HCT116 (cell line): ENCODE measurements at regions of chr16 and their contacts with region 1.

Region 1: DNA sequence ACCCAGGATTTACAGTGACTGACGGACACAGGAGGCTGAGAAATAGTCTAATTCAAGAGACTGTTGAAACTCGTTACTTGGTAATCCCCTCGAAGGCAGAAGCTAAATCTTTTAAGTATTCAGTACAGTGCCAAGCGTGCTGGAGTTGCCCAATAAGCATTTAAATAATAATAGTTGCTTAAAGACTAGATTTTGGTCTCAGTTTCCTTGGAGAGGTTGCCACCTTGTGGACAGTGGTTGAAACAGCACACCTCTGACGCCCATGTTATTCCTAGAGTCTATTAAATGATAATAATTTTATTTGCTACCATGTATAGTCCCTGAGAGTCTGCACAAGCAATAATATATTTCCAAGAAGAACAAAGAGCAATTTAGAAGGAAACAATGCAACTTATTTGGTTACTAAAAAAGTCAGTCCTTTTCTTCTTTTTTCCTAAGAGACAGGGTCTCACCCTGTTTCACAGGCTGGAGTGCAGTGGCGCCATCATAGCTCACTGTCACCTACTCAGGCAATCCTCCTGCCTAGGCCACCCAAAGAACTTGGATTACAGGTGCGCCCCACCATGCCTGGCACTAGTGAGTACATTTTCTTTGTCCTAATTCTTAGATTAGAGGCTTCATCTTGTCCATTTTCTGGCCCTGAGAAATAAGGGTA is 138.0 kb upstream of the NUDT7 start:
- DNase-seq: peak; percentile 46
- ATAC-seq: peak; percentile 80
- H3K4me3 ChIP-seq: no peak overlapping the region
- H3K27ac ChIP-seq: no peak overlapping the region
- H3K4me1 ChIP-seq: peaks cover 9 to 18% of the 10 kb centered on the region in 2 experiments
- H3K27me3 ChIP-seq: peaks cover 26% of the 10 kb centered on the region
- CTCF ChIP-seq: peak; percentile 66 to 96 (median 81)
- POLR2A ChIP-seq: no peak
- RAD21 ChIP-seq: peak; percentile 88

Region 2: GRCh38 chr16:77406677-77407076 is 177.7 kb before region 1 on chr16:
- CTCF ChIA-PET with region 1: no interaction called
- POLR2A ChIA-PET with region 1: no interaction called
- RAD21 ChIA-PET with region 1: no interaction called
- intact Hi-C with region 1: loop called (anchors 2 kb)
- DNase-seq: peak; percentile 4
- ATAC-seq: peak; percentile 55; the same call in 1 of the 2 replicates
- H3K4me3 ChIP-seq: no peak overlapping the region
- H3K27ac ChIP-seq: no peak overlapping the region
- H3K4me1 ChIP-seq: no peaks in the 10 kb centered on the region
- H3K27me3 ChIP-seq: peaks cover 20% of the 10 kb centered on the region; the same call in 1 of the 2 replicates
- CTCF ChIP-seq: peak; percentile 17 to 48 (median 41); a peak in 4 of 6 replicates
- POLR2A ChIP-seq: no peak
- RAD21 ChIP-seq: peak; percentile 43

Region 3: DNA sequence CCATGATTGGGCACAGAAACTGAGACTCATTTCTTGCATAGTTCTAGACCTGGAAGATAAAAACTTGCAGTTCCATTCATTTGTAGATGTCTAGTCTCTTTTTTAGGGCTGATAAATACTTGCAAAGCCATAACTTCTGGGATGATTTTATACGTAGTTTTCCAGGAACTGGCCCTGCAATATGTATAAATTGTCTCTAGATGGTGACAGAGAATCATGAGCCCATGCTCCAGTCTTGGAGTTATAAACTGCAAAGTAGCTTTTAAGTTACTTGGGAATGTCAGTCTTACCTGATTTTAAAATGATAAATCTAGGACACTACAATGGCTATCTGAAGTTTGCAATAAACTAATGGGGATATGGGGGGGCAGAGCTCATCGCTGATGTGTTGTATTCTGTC is 146.5 kb before region 1 on chr16:
- CTCF ChIA-PET with region 1: interaction called, 13 read pairs
- POLR2A ChIA-PET with region 1: no interaction called
- RAD21 ChIA-PET with region 1: no interaction called
- intact Hi-C with region 1: loop called (anchors 5 kb)
- DNase-seq: no peak
- ATAC-seq: no peak
- H3K4me3 ChIP-seq: no peak overlapping the region
- H3K27ac ChIP-seq: no peak overlapping the region
- H3K4me1 ChIP-seq: no peaks in the 10 kb centered on the region
- H3K27me3 ChIP-seq: peaks cover 29% of the 10 kb centered on the region
- CTCF ChIP-seq: peak in 2 of 3 experiments; percentile 7 to 39; a peak in 2 of 6 replicates
- POLR2A ChIP-seq: no peak
- RAD21 ChIP-seq: peak; percentile 41; the same call in 1 of the 2 replicates